K562 (cell line): ENCODE measurements at regions of chr6 and their contacts with region 1.

Region 1: DNA sequence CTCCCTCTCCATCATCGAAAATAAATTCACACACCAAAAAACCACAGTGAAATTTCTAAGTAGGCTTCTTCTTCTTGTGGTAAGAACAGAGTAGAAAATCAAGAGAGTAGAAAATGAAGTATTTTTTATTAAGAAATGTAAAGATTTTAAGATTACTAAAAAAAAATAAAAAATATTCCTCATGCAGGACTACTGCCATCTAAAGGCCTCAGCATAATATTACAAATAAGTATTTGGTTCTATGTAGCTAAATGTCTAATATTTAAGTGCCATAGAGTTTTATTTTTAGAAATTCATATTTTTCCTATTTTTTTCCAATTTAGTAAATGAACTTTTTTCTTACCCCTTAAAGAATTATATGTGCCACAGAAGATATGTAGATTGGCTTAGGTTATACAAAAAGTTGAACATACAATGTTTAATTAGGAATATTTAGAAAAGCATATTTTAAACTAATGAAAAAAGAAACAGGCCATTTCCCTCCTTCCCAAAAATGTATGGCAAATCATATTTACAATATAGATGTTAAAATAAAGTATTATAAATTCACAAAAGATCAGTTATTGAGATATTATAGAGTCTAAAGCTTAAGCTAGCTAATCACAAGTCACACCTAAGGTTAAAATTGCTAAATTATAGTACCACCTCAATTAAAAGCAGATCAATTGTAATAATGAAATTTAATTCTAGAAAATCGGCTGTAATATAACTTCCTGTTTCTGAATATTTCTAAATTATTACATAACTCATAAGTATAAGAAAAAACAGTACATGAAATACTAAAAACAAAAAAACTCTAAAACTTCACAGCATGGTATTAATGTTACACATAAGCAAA is 3.5 kb upstream of the NT5DC1 start:
- DNase-seq: no peak
- ATAC-seq: no peak
- H3K4me3 ChIP-seq: no peak overlapping the region
- H3K27ac ChIP-seq: no peak overlapping the region
- H3K4me1 ChIP-seq: peaks cover 4 to 7% of the 10 kb centered on the region in 2 experiments; a peak in 3 of 5 replicates
- H3K27me3 ChIP-seq: no peaks in the 10 kb centered on the region
- CTCF ChIP-seq: peak in 2 of 3 experiments; percentile 17 to 65; a peak in 3 of 6 replicates
- EP300 ChIP-seq: no peak
- POLR2A ChIP-seq: no peak
- RAD21 ChIP-seq: peak; percentile 54 to 58

Region 2: DNA sequence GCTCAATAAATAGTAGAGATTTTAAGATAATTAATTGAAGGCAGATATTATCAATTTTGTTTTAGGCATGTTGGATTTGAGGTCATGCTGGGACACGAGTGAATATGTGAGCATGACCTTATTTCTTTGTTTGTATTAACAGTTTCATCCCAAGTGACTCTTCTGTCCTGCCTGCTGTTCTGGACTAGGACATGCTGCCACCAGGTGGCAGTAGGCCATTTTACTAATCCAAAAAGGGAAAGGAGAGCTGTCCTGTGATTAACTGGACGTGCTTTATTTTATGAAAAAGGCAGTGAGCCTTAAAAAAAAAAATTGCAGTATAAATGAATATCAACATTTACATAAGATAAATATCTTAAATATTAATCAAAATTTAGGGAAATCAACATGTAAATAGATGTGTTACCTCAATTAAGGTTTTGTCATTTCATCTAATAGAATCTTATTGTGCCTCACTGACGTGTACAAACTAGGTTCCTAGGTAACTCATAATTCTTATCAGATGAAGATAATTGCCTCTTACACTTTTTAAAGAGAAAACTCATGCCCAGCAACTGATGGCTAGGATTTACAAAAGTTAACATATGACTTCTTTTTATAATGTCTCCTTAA is 86.3 kb before region 1 on chr6:
- CTCF ChIA-PET with region 1: interaction called, 5 read pairs
- POLR2A ChIA-PET with region 1: interaction called, 5 read pairs
- in situ Hi-C with region 1: no loop called
- intact Hi-C with region 1: loop called (anchors 1 kb)
- DNase-seq: peak; percentile 35 to 77 (median 45)
- ATAC-seq: peak; percentile 94
- H3K4me3 ChIP-seq: no peak overlapping the region
- H3K27ac ChIP-seq: no peak overlapping the region
- H3K4me1 ChIP-seq: no peaks in the 10 kb centered on the region
- H3K27me3 ChIP-seq: no peaks in the 10 kb centered on the region
- CTCF ChIP-seq: peak; percentile 75 to 81 (median 78)
- EP300 ChIP-seq: no peak
- POLR2A ChIP-seq: no peak
- RAD21 ChIP-seq: peak; percentile 84 to 86

Region 3: GRCh38 chr6:116060572-116061283 is 36.5 kb before region 1 on chr6 and contains the start of gene FRK:
- CTCF ChIA-PET with region 1: no interaction called
- POLR2A ChIA-PET with region 1: no interaction called
- in situ Hi-C with region 1: no loop called
- intact Hi-C with region 1: loop called (anchors 5 kb)
- DNase-seq: no peak
- ATAC-seq: peak; percentile 56
- H3K4me3 ChIP-seq: no peak within 1 kb of the TSS
- H3K27ac ChIP-seq: peak within 1 kb of the TSS; percentile 32; the same call in 1 of the 3 replicates
- H3K4me1 ChIP-seq: peaks cover 5 to 10% of the 10 kb centered on the region in 2 experiments; a peak in 4 of 5 replicates
- H3K27me3 ChIP-seq: no peaks in the 10 kb centered on the region
- CTCF ChIP-seq: 0 out of 6 replicates have a peak, but pooled peaks of 1 of the 3 experiments have one; percentile 7
- EP300 ChIP-seq: no peak
- POLR2A ChIP-seq: no peak
- RAD21 ChIP-seq: no peak
- polyA plus RNA-seq, gene FRK: 0.03 to 0.07 TPM